Activated CD4-positive, alpha-beta T cell treated with anti-CD3 and anti-CD28 coated beads for 36 hours (primary cell): ENCODE measurements at regions of chr18 and their contacts with region 1.

Region 1: GRCh38 chr18:9082711-9083510 is 19.6 kb upstream of the NDUFV2 start:
- DNase-seq: peak; percentile 80
- ATAC-seq: peak; percentile 91
- H3K4me3 Mint-ChIP-seq: peak overlapping the region; percentile 62
- H3K27ac Mint-ChIP-seq: peak overlapping the region; percentile 96
- H3K4me1 Mint-ChIP-seq: peaks cover 41% of the 10 kb centered on the region
- H3K27me3 Mint-ChIP-seq: no peaks in the 10 kb centered on the region

Region 2: GRCh38 chr18:9095297-9096006 is 12.5 kb after region 1 on chr18:
- CTCF ChIA-PET with region 1: interaction called, 14 read pairs
- POLR2A ChIA-PET with region 1: interaction called, 25 read pairs
- intact Hi-C with region 1: loop called (anchors 1 kb)
- DNase-seq: peak; percentile 82
- ATAC-seq: peak; percentile 69
- H3K4me3 Mint-ChIP-seq: peak overlapping the region; percentile 68
- H3K27ac Mint-ChIP-seq: peak overlapping the region; percentile 100
- H3K4me1 Mint-ChIP-seq: peaks cover 68% of the 10 kb centered on the region
- H3K27me3 Mint-ChIP-seq: no peaks in the 10 kb centered on the region

Region 3: GRCh38 chr18:9102508-9103375 is 19.8 kb after region 1 on chr18 and contains the start of gene NDUFV2:
- CTCF ChIA-PET with region 1: interaction called, 11 read pairs
- POLR2A ChIA-PET with region 1: interaction called, 20 read pairs
- intact Hi-C with region 1: loop called (anchors 1 to 2 kb)
- DNase-seq: peak; percentile 99
- ATAC-seq: peak; percentile 88
- H3K4me3 Mint-ChIP-seq: peak within 1 kb of the TSS; percentile 89
- H3K27ac Mint-ChIP-seq: peak within 1 kb of the TSS; percentile 97
- H3K4me1 Mint-ChIP-seq: peaks cover 40% of the 10 kb centered on the region
- H3K27me3 Mint-ChIP-seq: no peaks in the 10 kb centered on the region
- total RNA-seq, gene NDUFV2: 331 to 372 TPM

Region 4: DNA sequence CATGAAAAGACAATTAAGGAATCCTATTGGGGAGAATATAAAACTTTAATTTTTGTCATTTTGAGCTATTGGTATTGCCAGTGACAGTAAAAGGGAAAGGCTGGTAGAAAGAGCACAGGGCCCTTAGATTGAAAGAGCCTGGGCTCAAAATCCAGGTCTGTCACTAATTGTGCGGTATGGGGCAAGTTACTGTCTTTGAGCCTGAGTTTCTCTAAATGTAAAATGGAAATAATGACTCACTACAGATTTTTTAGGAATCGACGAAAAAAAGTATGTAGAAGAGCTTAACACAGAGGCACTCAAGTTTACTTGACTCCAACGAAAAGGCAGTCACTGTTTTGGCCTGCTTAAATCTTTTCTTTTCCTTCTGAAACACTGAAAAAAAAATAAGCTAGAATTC is 26.6 kb after region 1 on chr18:
- CTCF ChIA-PET with region 1: interaction called, 16 read pairs
- POLR2A ChIA-PET with region 1: interaction called, 20 read pairs
- intact Hi-C with region 1: no loop called
- DNase-seq: no peak
- ATAC-seq: peak; percentile 58
- H3K4me3 Mint-ChIP-seq: peak overlapping the region; percentile 55
- H3K27ac Mint-ChIP-seq: peak overlapping the region; percentile 77
- H3K4me1 Mint-ChIP-seq: peaks cover 87% of the 10 kb centered on the region
- H3K27me3 Mint-ChIP-seq: no peaks in the 10 kb centered on the region

Region 5: GRCh38 chr18:9337873-9338272 is 255.0 kb after region 1 on chr18:
- CTCF ChIA-PET with region 1: no interaction called
- POLR2A ChIA-PET with region 1: no interaction called
- intact Hi-C with region 1: no loop called
- DNase-seq: no peak
- ATAC-seq: peak; percentile 14
- H3K4me3 Mint-ChIP-seq: no peak overlapping the region
- H3K27ac Mint-ChIP-seq: no peak overlapping the region
- H3K4me1 Mint-ChIP-seq: peaks cover 22% of the 10 kb centered on the region
- H3K27me3 Mint-ChIP-seq: peaks cover 3% of the 10 kb centered on the region